IMR-90 (cell line): ENCODE measurements at regions of chr3 and their contacts with region 1.

Region 1: DNA sequence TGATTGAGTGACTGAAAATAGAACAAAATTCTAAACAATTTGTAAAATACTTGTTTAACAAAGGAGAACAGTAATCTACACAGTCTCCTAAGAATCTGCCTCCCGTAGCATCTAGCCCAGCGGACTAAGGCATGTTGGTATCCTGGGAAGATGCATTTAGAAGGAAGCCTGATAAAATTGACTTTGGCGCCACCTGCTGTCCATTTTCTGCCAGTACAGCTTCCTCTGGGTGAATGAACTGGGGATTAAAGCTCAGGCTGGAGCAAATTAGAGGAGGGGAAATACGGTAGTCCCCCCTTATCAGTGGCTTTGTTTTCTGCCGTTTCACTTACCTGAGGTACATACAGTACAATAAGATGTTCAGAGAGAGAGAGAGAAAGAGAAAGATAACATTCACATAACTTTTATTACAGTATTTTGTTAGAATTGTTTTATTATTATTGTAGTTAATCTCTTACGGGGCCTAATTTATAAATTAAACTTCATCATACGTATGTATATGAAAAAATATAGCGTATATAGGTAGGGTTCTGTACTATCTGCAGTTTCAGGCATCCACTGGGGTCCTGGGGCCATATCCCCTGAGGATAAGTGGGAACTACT is 191.6 kb downstream of the GAP43 start:
- DNase-seq: peak; percentile 76
- ATAC-seq: peak; percentile 95
- H3K4me3 ChIP-seq: no peak overlapping the region
- H3K27ac ChIP-seq: no peak overlapping the region
- H3K4me1 ChIP-seq: no peaks in the 10 kb centered on the region
- H3K27me3 ChIP-seq: no peaks in the 10 kb centered on the region
- CTCF ChIP-seq: peak; percentile 88
- POLR2A ChIP-seq: peak; percentile 62
- RAD21 ChIP-seq: peak; percentile 94

Region 2: GRCh38 chr3:115099986-115100571 is 714.8 kb before region 1 on chr3:
- CTCF ChIA-PET with region 1: no interaction called
- POLR2A ChIA-PET with region 1: no interaction called
- dilution Hi-C with region 1: no loop called
- in situ Hi-C with region 1: no loop called
- intact Hi-C with region 1: loop called (anchors 5 kb)
- DNase-seq: peak; percentile 70
- ATAC-seq: peak; percentile 95
- H3K4me3 ChIP-seq: peak overlapping the region; percentile 38
- H3K27ac ChIP-seq: peak overlapping the region; percentile 58; the same call in 1 of the 2 replicates
- H3K4me1 ChIP-seq: no peaks in the 10 kb centered on the region; the same call in 1 of the 2 replicates
- H3K27me3 ChIP-seq: no peaks in the 10 kb centered on the region
- CTCF ChIP-seq: no peak
- POLR2A ChIP-seq: no peak
- RAD21 ChIP-seq: no peak

Region 3: DNA sequence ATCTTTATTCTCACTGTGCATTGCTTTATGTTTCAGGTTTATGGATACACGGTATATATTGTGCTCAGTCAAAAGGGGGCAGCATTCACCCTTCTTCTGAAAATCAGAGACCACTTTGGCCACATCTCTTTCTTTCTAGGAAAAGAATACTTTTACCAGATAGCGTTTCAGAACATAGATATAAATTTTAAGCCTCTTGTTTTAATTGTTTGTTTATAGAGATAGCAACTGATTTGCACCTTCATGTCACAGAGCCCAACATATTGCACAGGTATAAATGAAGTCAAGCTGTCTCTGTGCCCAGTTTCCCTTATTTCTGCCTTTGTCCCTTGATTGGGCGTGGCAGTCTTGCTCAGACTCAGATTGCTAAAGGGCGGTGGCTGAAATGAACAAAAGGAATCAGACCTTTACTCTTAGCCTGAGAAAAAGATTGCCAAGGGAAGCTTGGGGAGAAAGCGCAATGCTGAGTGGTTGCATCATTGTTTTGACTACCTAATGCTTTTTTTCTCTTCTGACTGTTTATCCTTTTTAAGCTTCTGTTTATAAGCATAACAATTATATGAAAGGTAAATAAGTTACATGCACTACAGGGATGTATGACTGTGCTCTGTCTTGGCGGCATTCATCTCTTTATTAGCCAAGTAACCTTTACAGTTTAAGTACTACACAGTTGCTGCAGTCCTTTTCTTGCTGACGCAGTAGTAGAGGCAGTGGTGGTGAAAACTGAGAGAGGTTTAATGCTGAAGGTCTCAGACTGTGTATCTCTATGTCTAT is 597.0 kb before region 1 on chr3:
- CTCF ChIA-PET with region 1: interaction called, 3 read pairs
- POLR2A ChIA-PET with region 1: no interaction called
- dilution Hi-C with region 1: no loop called
- in situ Hi-C with region 1: loop called (anchors 5 kb)
- intact Hi-C with region 1: loop called (anchors 1 kb)
- DNase-seq: peak; percentile 71
- ATAC-seq: peak; percentile 97
- H3K4me3 ChIP-seq: no peak overlapping the region
- H3K27ac ChIP-seq: 0 out of 2 replicates have a peak overlapping the region, but pooled peaks have one; percentile 42
- H3K4me1 ChIP-seq: peaks cover 3% of the 10 kb centered on the region; the same call in 1 of the 2 replicates
- H3K27me3 ChIP-seq: no peaks in the 10 kb centered on the region
- CTCF ChIP-seq: peak; percentile 93
- POLR2A ChIP-seq: no peak
- RAD21 ChIP-seq: peak; percentile 93

Region 4: DNA sequence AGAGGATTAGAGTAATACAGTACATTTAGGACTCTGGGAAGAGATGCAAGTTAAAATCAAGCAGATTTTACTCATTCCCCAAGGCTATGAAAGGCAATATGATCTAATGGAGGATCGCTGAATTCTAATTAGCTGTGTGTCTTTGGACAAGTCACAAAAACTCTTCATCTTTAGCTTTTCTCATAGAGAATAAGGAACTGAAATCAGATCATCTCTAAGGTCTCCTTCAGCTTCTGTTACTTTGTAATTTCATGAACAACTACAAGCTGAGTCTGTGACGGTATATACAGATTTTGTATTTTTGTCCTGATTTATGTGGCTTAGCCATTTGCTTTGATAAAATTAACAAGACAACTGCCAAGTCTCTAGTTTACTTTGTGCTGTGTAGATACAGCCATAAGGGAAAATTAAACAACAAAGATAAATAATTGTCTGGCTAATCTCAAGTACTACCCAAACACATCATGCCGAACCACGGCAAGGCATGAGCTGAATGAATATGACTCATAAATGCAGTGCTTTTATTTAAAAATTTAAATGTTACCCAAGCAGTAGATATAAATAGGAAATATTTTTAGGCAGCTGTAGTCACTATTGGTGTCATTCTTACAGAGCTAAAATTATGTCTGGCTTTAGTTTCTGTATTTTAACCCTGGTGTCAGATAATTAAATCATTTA is 110.1 kb before region 1 on chr3:
- CTCF ChIA-PET with region 1: interaction called, 4 read pairs
- POLR2A ChIA-PET with region 1: no interaction called
- dilution Hi-C with region 1: no loop called
- in situ Hi-C with region 1: no loop called
- intact Hi-C with region 1: loop called (anchors 5 kb)
- DNase-seq: peak; percentile 75
- ATAC-seq: peak; percentile 79
- H3K4me3 ChIP-seq: no peak overlapping the region
- H3K27ac ChIP-seq: 0 out of 2 replicates have a peak overlapping the region, but pooled peaks have one; percentile 13
- H3K4me1 ChIP-seq: peaks cover 6% of the 10 kb centered on the region
- H3K27me3 ChIP-seq: no peaks in the 10 kb centered on the region
- CTCF ChIP-seq: no peak
- POLR2A ChIP-seq: no peak
- RAD21 ChIP-seq: no peak

Region 5: GRCh38 chr3:116561529-116561928 is 746.6 kb after region 1 on chr3:
- CTCF ChIA-PET with region 1: no interaction called
- POLR2A ChIA-PET with region 1: no interaction called
- dilution Hi-C with region 1: no loop called
- in situ Hi-C with region 1: no loop called
- intact Hi-C with region 1: no loop called
- DNase-seq: no peak
- ATAC-seq: no peak
- H3K4me3 ChIP-seq: no peak overlapping the region
- H3K27ac ChIP-seq: no peak overlapping the region
- H3K4me1 ChIP-seq: no peaks in the 10 kb centered on the region
- H3K27me3 ChIP-seq: no peaks in the 10 kb centered on the region
- CTCF ChIP-seq: no peak
- POLR2A ChIP-seq: no peak
- RAD21 ChIP-seq: no peak